Activated T-helper 1 cell treated with anti-CD3 and anti-CD28 coated beads, Interleukin-12 subunit alpha, Interleukin-12 subunit beta, Interleukin-2, Interleukin-4 antibody, amounts not matched to agents 30 ng/mL and 10 ng/mL and 1 ng/mL, durations not matched to agents 14 hours and 24 hours and 36 hours (primary cell): ENCODE measurements at regions of chr5 and their contacts with region 1.

Region 1: GRCh38 chr5:151080623-151081430 is at the start of gene TNIP1:
- DNase-seq: peak; percentile 95
- H3K4me3 Mint-ChIP-seq: peak within 1 kb of the TSS; percentile 91
- H3K27ac Mint-ChIP-seq: peak within 1 kb of the TSS; percentile 93
- H3K4me1 Mint-ChIP-seq: peaks cover 85% of the 10 kb centered on the region
- H3K27me3 Mint-ChIP-seq: no peaks in the 10 kb centered on the region
- total RNA-seq, gene TNIP1: 287 and 304 TPM in 2 replicates

Region 2: DNA sequence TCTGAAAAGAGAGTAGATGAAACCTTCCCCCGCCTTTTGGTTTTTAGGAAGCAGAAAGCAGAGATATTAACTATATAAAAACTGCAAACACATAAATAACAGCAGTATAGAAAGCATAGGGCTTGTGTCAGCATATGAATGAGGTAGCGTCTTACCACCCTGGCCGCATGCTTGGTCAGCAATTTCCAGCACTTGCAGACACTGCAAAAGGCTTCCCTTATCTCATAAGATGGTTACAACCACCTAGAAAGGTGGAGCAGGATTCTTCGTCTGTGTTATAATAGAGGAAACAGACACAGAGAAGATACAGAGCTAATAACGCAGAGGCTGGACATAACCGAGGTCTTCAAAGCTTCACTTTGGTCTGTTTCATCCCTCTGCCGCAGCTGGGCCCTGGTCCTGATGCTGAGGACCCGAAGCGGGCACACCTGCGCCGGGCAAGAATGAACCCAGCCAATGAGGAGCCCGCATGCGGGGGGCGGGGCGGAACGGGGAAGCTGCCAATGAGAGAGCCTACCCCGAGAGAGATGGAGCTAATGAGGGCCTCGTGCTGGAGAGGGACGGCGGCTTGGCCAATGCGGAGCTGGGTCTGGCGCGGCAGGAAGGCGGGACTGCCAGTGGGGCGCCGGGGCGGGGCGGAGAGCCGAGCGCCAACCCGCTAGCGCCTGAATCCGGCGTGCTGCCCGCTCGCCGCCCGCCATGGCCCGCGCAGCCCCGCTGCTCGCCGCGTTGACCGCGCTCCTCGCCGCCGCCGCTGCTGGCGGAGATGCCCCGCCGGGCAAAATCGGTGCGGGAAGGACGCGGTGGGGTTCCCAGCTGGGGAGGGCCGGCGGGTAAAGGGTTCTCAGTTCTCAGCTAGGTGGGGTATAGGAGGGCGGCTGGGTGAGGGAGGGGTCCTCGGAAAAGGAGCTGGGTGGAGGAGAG is 1723.2 kb before region 1 on chr5 and contains the start of gene PCYOX1L:
- intact Hi-C with region 1: loop called (anchors 5 kb)
- DNase-seq: peak; percentile 97
- H3K4me3 Mint-ChIP-seq: peak within 1 kb of the TSS; percentile 93
- H3K27ac Mint-ChIP-seq: peak within 1 kb of the TSS; percentile 84
- H3K4me1 Mint-ChIP-seq: peaks cover 67% of the 10 kb centered on the region
- H3K27me3 Mint-ChIP-seq: no peaks in the 10 kb centered on the region
- total RNA-seq, gene PCYOX1L: 21.9 and 23.4 TPM in 2 replicates

Region 3: GRCh38 chr5:150449517-150450339 is 631.1 kb before region 1 on chr5 and contains the start of gene RPS14:
- intact Hi-C with region 1: loop called (anchors 2 kb)
- DNase-seq: peak; percentile 91
- H3K4me3 Mint-ChIP-seq: peak within 1 kb of the TSS; percentile 92
- H3K27ac Mint-ChIP-seq: peak within 1 kb of the TSS; percentile 100
- H3K4me1 Mint-ChIP-seq: peaks cover 40% of the 10 kb centered on the region
- H3K27me3 Mint-ChIP-seq: peaks cover 2% of the 10 kb centered on the region
- total RNA-seq, gene RPS14: 2,328 and 2,429 TPM in 2 replicates

Region 4: GRCh38 chr5:150778517-150779396 is 302.1 kb before region 1 on chr5 and contains the start of gene SMIM3:
- intact Hi-C with region 1: loop called (anchors 5 kb)
- DNase-seq: peak; percentile 53
- H3K4me3 Mint-ChIP-seq: peak within 1 kb of the TSS; percentile 100
- H3K27ac Mint-ChIP-seq: peak within 1 kb of the TSS; percentile 83
- H3K4me1 Mint-ChIP-seq: peaks cover 62% of the 10 kb centered on the region
- H3K27me3 Mint-ChIP-seq: peaks cover 2% of the 10 kb centered on the region
- total RNA-seq, gene SMIM3: 12.8 and 13.4 TPM in 2 replicates

Region 5: GRCh38 chr5:151093476-151093889 is 12.7 kb after region 1 on chr5:
- intact Hi-C with region 1: loop called (anchors 1 kb)
- DNase-seq: no peak
- H3K4me3 Mint-ChIP-seq: peak overlapping the region; percentile 67
- H3K27ac Mint-ChIP-seq: peak overlapping the region; percentile 82
- H3K4me1 Mint-ChIP-seq: peaks cover 80% of the 10 kb centered on the region
- H3K27me3 Mint-ChIP-seq: no peaks in the 10 kb centered on the region

Region 6: GRCh38 chr5:151150471-151151262 is 69.8 kb after region 1 on chr5:
- intact Hi-C with region 1: loop called (anchors 1 kb)
- DNase-seq: peak; percentile 67
- H3K4me3 Mint-ChIP-seq: peak overlapping the region; percentile 71
- H3K27ac Mint-ChIP-seq: peak overlapping the region; percentile 96
- H3K4me1 Mint-ChIP-seq: peaks cover 95% of the 10 kb centered on the region
- H3K27me3 Mint-ChIP-seq: no peaks in the 10 kb centered on the region

Region 7: GRCh38 chr5:151213800-151214613 is 133.2 kb after region 1 on chr5:
- intact Hi-C with region 1: loop called (anchors 2 kb)
- DNase-seq: peak; percentile 83
- H3K4me3 Mint-ChIP-seq: peak overlapping the region; percentile 87
- H3K27ac Mint-ChIP-seq: peak overlapping the region; percentile 93
- H3K4me1 Mint-ChIP-seq: peaks cover 81% of the 10 kb centered on the region
- H3K27me3 Mint-ChIP-seq: no peaks in the 10 kb centered on the region